Ovary (tissue), 10 donors: ENCODE measurements at regions of chr2 and their contacts with region 1.

Region 1: DNA sequence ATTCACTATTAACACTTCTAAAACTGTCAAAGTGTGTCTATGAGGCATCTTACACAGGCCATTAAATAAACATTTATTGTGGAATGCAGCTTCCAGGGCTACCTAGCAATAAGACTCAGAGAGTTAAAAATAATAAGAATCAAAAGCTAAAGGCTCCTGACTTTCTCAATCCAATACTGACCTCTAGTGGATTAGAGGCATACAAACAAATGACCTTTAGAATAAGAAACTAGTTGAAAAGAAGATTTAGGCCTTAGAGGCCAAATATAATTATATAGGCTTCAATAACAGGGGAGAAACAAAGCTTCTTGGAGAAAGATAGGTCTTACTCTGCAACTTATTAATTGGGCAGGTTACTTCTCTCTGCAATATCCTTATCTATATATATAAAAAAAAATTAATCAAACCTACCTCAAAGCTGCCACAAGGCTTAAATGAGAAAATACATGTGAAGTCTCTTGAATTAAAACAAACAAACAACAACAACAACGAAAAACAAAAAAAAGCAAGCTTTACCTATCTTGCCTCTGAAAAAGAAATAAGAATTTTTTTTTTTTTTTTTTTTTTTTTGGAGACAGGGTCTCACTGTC is 246.1 kb downstream of the EXOC6B start:
- DNase-seq: no peak
- H3K4me3 ChIP-seq: no peak overlapping the region
- H3K27ac ChIP-seq: no peak overlapping the region
- H3K4me1 ChIP-seq: peaks cover 2% of the 10 kb centered on the region
- H3K27me3 ChIP-seq: no peaks in the 10 kb centered on the region
- CTCF ChIP-seq: peak; percentile 25 to 51 (median 28)
- EP300 ChIP-seq: no peak
- POLR2A ChIP-seq: no peak

Region 2: GRCh38 chr2:71558300-71559051 is 1021.2 kb before region 1 on chr2:
- intact Hi-C with region 1: loop called in 1 of 4 experiments (anchors 10 kb)
- DNase-seq: no peak
- H3K4me3 ChIP-seq: no peak overlapping the region
- H3K27ac ChIP-seq: no peak overlapping the region
- H3K4me1 ChIP-seq: no peaks in the 10 kb centered on the region
- H3K27me3 ChIP-seq: no peaks in the 10 kb centered on the region
- CTCF ChIP-seq: no peak
- EP300 ChIP-seq: no peak
- POLR2A ChIP-seq: no peak

Region 3: DNA sequence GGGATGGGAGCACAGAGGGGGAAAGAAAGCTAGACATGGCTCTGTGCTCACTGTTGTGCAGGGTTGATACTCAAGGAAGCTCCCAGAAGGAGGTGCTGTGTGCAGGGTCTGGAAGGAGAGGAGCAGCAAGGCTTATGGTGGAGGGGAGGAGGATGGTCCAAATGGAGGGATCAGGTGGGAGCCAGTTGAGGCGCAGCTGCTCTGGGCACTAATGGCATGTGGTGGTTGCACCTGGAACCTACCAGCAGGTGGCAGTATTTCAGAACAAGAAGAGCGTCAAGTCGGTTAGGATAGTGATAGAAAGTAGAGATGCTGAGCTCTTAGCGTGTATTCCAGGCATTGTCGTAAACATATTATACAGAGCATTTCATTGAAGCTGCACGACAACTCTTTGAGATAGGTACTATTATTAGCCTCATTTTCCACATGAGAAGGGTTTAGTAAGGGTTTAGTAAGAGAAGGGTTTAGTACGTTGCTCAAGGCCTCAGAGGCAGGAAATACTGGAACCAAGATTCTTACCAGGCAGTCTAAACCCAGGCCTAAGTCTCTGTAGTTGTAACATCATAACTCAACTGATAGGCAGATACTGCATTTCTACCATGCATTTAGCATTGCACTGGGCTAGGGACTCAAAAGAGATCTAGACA is 655.7 kb before region 1 on chr2:
- intact Hi-C with region 1: loop called in 2 of 4 experiments (anchors 10 kb)
- DNase-seq: peak; percentile 31 to 60 (median 56)
- H3K4me3 ChIP-seq: no peak overlapping the region
- H3K27ac ChIP-seq: no peak overlapping the region
- H3K4me1 ChIP-seq: no peaks in the 10 kb centered on the region
- H3K27me3 ChIP-seq: no peaks in the 10 kb centered on the region
- CTCF ChIP-seq: peak; percentile 40 to 50 (median 42)
- EP300 ChIP-seq: no peak
- POLR2A ChIP-seq: no peak